HAP-1 (cell line): ENCODE measurements at regions of chr6 and their contacts with region 1.

Region 1: GRCh38 chr6:30725713-30726505 is 5.8 kb downstream of the TUBB start:
- DNase-seq: peak; percentile 38 to 46
- H3K4me3 ChIP-seq: no peak overlapping the region
- H3K4me1 ChIP-seq: peaks cover 17% of the 10 kb centered on the region
- H3K27me3 ChIP-seq: no peaks in the 10 kb centered on the region

Region 2: DNA sequence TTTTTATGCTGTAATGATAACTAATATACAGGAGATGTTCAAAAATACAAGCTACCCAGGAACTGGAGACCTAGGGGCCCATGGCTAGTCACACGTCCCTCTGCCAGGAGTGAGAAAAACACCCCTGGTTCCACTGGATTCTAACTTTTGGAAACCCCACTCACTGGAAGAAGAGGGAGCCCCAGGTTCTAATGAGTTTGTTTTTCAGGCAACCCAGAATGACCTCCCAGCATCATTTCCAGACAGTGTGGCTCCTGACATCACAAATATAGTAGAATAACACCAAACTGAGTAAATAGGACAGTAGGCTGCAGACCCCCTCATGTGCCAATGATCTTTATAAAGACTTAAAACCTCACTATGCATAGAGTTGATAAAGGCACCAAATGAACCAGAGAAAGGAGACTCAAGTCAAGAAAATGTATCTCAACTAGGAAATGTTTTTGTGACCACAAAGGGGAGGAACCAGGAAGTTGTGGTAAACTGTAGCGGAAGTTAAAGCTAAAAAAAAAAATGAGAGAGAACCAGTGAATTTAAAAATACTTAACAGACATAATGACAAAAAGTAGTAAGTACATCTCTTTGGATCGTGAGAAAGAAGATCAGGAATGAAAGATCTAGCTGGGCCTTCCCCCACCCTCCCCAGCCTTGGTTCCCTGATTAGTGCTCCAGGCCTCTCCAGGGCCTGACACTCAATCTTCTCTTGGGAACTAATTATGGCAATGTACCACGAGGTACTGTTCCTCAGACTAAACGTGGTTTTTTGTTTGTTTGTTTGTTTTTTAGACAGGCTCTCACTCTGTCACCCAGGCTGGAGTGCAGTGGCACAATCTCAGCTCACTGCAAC is 216.8 kb before region 1 on chr6:
- in situ Hi-C with region 1: no loop called
- DNase-seq: no peak
- H3K4me3 ChIP-seq: no peak overlapping the region
- H3K4me1 ChIP-seq: 0 out of 2 replicates have a peak, but pooled peaks cover 2% of the 10 kb centered on the region
- H3K27me3 ChIP-seq: no peaks in the 10 kb centered on the region; the same call in 1 of the 2 replicates

Region 3: GRCh38 chr6:30672445-30673253 is 53.3 kb before region 1 on chr6 and contains the start of gene DHX16:
- in situ Hi-C with region 1: loop called (anchors 5 kb)
- DNase-seq: peak; percentile 95 to 98
- H3K4me3 ChIP-seq: peak within 1 kb of the TSS; percentile 85
- H3K4me1 ChIP-seq: peaks cover 19% of the 10 kb centered on the region
- H3K27me3 ChIP-seq: no peaks in the 10 kb centered on the region

Region 4: DNA sequence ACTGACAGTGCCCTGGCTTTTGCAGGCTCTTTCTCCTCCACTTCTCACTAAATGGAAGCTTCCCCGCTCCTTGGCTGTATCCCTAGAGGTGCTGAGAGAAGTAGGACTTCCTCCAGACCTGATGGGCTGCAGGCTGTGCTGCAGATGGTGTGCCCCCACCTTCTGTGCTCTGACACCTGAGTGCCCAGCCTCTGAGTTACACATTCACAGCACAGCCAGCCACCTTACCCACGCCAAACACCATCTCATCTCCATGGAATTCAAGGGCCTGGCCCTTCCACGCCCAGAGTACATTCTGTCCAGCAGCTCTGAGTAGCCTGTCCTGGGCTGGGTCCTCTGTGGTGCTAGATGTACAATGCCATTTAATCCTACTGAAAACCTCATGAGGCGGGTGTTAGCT is 200.7 kb after region 1 on chr6:
- in situ Hi-C with region 1: no loop called
- DNase-seq: no peak
- H3K4me3 ChIP-seq: no peak overlapping the region
- H3K4me1 ChIP-seq: no peaks in the 10 kb centered on the region
- H3K27me3 ChIP-seq: no peaks in the 10 kb centered on the region